Ascending aorta (tissue), 2 donors: ENCODE measurements at regions of chr5 and their contacts with region 1.

Region 1: DNA sequence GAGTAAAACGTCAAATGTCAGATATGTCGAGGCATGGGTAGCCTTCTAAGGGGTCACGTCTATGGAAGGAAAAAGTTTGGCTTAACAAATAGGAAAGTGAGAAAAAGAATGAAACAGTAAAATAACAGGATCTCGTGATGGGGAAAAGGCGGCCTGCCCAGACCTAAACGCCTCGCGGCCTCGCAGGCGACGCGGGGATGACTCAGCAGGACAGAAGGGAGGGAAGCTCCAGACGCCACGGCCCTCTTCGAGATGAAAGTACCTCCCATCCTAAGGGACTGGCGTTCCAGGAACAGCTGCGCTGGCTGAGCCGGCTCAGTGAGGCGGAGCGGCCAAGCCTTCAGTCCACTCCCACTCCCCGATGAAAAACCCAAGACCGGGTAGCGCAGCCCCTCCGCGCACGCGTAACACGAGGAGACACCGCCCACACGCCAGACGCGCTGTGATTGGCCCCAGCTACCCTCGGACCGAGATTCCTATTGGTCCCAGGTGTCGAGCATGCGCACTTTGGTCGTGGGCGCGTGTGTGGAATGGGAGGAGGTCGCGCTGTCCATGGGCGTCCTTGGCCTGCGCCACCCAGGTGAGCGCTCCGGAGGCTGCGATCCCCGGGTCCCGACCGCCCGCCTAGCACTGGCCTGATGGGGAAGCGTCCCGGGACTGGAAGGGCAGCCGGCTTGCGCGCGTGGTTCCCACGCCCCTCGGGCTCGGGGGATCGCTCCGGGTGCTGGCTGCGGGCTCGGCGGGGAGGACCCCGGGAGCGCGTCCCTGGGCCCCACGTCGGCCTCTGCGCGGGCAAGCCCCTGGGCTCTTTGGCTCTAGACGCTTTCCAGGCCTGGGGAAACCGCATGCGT is 588.5 kb downstream of the MTRR start:
- DNase-seq: peak; percentile 84 to 91
- H3K4me3 ChIP-seq: peak overlapping the region; percentile 58 to 98
- H3K27ac ChIP-seq: peak overlapping the region; percentile 83 to 89
- H3K4me1 ChIP-seq: no peaks in the 10 kb centered on the region
- H3K27me3 ChIP-seq: no peaks in the 10 kb centered on the region
- CTCF ChIP-seq: no peak

Region 2: GRCh38 chr5:7131680-7132079 is 1325.7 kb before region 1 on chr5:
- intact Hi-C with region 1: no loop called
- DNase-seq: no peak
- H3K4me3 ChIP-seq: no peak overlapping the region
- H3K27ac ChIP-seq: no peak overlapping the region
- H3K4me1 ChIP-seq: no peaks in the 10 kb centered on the region
- H3K27me3 ChIP-seq: no peaks in the 10 kb centered on the region
- CTCF ChIP-seq: no peak

Region 3: GRCh38 chr5:8686707-8687106 is 229.3 kb after region 1 on chr5:
- intact Hi-C with region 1: loop called (anchors 2 kb)
- DNase-seq: peak in 1 of 2 donors; percentile 70
- H3K4me3 ChIP-seq: peak overlapping the region in 1 of 2 donors; percentile 39
- H3K27ac ChIP-seq: peak overlapping the region; percentile 52 to 57
- H3K4me1 ChIP-seq: peaks cover 0 to 9% of the 10 kb centered on the region in 2 donors
- H3K27me3 ChIP-seq: no peaks in the 10 kb centered on the region
- CTCF ChIP-seq: no peak

Region 4: GRCh38 chr5:10333154-10334006 is 1876.0 kb after region 1 on chr5:
- intact Hi-C with region 1: loop called (anchors 10 kb)
- DNase-seq: no peak
- H3K4me3 ChIP-seq: peak overlapping the region; percentile 74 to 85
- H3K27ac ChIP-seq: peak overlapping the region; percentile 27 to 49
- H3K4me1 ChIP-seq: peaks cover 0 to 33% of the 10 kb centered on the region in 2 donors
- H3K27me3 ChIP-seq: no peaks in the 10 kb centered on the region
- CTCF ChIP-seq: peak in 1 of 3 experiments; percentile 8